ENCODE measurements at regions of chr16 and their contacts with region 1.

Region 1: DNA sequence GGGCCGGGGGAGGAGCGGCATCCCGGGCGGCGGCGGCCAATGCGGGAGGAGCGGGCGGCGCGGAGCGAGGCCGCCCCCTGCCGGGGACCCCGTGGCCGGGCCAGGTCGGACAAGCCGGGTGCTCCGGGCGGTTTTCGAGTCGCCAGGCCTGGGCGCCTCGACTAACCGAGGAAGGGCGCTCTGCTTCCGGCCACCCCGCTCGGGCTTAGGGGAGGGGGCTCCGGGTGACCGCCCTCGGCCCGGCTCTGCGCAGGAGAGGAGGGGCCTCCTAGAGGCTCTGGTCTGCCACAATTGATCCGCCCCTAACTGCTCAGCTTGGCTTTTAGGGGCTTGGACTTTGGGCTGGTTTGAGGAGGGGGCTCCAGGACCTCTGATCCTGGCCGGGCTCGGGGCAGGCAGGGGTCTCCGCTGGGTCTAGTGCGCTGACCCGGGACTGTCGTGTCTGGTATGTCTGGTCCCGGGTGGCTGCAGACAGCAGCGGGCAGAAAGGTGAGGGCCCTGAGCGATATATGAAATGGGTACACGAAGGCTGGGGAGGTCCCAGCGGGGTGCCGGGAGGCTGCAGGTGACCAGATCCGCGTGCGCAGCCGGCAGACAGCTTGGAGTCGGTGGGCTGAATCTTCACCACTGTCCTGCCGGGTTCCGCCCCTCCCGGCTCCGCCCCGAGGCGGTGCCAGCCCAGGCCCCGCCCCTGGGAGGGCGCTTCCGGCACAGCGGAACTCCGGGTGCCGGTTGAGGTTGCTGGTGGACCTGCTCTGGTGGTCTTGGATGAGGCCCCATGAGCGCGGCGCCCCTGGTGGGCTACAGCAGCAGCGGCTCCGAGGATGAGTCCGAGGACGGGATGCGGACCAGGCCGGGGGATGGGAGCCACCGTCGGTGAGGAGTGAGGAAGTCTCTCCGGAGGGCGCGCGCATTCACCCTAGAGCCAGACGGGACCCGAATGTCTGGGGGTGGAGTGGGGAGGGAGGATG is at the start of gene USB1:
- DNase-seq: peak; percentile 95
- H3K4me3 Mint-ChIP-seq: peak within 1 kb of the TSS; percentile 98
- H3K27ac Mint-ChIP-seq: peak within 1 kb of the TSS; percentile 76
- H3K4me1 Mint-ChIP-seq: peaks cover 30% of the 10 kb centered on the region
- H3K27me3 Mint-ChIP-seq: no peaks in the 10 kb centered on the region
- CTCF ChIP-seq: peak; percentile 91
- total RNA-seq, gene USB1: 59.3 and 67.0 TPM in 2 replicates

Region 2: GRCh38 chr16:57576429-57576870 is 424.5 kb before region 1 on chr16:
- CTCF ChIA-PET with region 1: interaction called, 6 read pairs
- intact Hi-C with region 1: loop called (anchors 1 kb)
- DNase-seq: peak; percentile 82
- H3K4me3 Mint-ChIP-seq: no peak overlapping the region
- H3K27ac Mint-ChIP-seq: no peak overlapping the region
- H3K4me1 Mint-ChIP-seq: peaks cover 8% of the 10 kb centered on the region
- H3K27me3 Mint-ChIP-seq: peaks cover 35% of the 10 kb centered on the region
- CTCF ChIP-seq: peak; percentile 98

Region 3: DNA sequence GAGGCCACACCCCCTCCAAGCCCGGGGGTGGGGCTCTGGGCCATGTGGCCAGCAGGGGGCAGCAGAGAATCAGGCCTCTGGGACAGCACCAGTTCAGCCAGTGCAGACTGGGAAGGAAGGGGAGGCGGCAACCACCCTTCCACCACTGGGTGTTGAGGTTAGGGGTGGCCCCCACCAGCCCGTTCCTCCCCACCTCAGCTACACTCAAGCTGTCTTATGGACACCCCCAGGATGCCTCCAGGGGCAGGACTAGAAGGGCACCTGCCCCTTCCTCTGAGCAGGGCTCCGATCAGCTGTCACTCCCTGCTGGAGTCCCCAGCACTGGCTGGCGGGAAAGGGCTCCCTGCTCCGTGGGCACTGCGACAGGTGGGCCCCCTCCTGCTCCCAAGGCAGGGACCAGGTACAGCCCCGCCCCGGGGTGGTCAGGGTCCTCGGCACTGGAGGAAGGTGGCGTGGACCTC is 243.6 kb before region 1 on chr16:
- CTCF ChIA-PET with region 1: interaction called, 5 read pairs
- intact Hi-C with region 1: loop called (anchors 10 kb)
- DNase-seq: peak; percentile 98
- H3K4me3 Mint-ChIP-seq: no peak overlapping the region
- H3K27ac Mint-ChIP-seq: no peak overlapping the region
- H3K4me1 Mint-ChIP-seq: no peaks in the 10 kb centered on the region
- H3K27me3 Mint-ChIP-seq: no peaks in the 10 kb centered on the region
- CTCF ChIP-seq: peak; percentile 95

Region 4: DNA sequence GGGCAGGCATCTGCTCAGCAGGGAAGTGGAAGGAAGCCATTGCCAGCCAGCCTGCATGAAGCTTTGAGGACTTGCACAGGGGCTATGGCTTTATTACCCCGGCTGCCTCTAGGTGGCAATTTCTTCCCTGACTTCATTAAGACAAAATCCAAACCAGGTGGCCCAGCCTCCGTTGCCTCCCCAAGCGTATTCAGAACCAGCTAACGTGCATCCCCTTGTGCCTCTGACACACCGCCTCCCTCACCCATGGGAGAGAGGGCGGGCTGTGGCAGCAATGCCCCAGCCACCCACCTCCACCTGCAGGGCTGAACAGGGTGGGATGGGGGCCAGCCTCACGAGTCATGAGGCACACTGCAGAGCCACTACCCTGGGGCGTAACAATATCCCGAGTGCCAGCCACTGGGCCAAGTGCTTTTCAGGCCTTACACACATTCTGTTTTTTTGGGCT is 205.5 kb before region 1 on chr16:
- CTCF ChIA-PET with region 1: interaction called, 5 read pairs
- intact Hi-C with region 1: loop called (anchors 5 kb)
- DNase-seq: peak; percentile 76
- H3K4me3 Mint-ChIP-seq: no peak overlapping the region
- H3K27ac Mint-ChIP-seq: no peak overlapping the region
- H3K4me1 Mint-ChIP-seq: peaks cover 37% of the 10 kb centered on the region
- H3K27me3 Mint-ChIP-seq: no peaks in the 10 kb centered on the region
- CTCF ChIP-seq: peak; percentile 72

Region 5: DNA sequence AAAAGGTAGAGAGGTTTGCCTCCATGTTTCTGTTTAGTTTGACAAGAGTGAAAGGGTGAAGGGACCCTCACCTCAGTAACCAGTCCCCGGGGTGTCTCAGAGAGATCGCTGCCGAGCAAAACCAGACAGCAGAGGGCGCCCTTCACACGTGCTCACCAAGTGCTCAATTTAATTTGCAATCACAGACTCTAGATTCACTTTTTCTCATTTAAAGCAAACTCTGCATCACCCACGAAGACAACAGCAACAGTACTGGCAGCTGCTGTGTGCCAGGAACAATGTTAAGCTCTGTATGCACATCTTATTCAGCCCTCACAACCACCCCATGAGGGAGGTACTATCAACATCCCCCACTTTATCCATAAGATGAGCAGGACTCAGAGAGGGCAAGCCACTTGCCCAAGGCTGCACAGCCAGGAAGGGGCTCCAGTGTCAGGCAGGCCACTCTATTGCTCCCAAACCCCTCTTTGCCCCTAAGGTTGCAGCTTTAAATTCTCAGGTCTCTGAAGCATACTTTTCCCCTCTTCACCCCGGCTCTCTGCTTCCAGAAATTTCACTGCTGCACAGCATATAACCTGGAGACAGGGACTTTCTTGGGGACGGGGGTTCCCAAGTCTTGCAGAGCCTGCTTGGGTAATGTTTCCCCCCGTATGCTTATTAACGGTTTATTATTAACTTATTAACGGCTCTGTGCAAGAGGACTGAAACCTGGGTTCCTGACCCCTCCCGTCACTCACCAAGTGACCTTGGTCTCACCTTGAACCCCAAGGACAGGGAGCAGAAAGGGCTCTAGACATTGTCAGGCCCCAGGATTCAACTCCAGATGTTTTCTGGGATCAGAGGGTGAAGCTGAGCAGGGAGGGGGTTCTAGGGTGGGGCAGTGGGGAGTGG is 101.0 kb before region 1 on chr16:
- CTCF ChIA-PET with region 1: interaction called, 7 read pairs
- intact Hi-C with region 1: loop called (anchors 1 kb)
- DNase-seq: peak; percentile 86
- H3K4me3 Mint-ChIP-seq: no peak overlapping the region
- H3K27ac Mint-ChIP-seq: no peak overlapping the region
- H3K4me1 Mint-ChIP-seq: peaks cover 26% of the 10 kb centered on the region
- H3K27me3 Mint-ChIP-seq: peaks cover 23% of the 10 kb centered on the region
- CTCF ChIP-seq: peak; percentile 85

Region 6: DNA sequence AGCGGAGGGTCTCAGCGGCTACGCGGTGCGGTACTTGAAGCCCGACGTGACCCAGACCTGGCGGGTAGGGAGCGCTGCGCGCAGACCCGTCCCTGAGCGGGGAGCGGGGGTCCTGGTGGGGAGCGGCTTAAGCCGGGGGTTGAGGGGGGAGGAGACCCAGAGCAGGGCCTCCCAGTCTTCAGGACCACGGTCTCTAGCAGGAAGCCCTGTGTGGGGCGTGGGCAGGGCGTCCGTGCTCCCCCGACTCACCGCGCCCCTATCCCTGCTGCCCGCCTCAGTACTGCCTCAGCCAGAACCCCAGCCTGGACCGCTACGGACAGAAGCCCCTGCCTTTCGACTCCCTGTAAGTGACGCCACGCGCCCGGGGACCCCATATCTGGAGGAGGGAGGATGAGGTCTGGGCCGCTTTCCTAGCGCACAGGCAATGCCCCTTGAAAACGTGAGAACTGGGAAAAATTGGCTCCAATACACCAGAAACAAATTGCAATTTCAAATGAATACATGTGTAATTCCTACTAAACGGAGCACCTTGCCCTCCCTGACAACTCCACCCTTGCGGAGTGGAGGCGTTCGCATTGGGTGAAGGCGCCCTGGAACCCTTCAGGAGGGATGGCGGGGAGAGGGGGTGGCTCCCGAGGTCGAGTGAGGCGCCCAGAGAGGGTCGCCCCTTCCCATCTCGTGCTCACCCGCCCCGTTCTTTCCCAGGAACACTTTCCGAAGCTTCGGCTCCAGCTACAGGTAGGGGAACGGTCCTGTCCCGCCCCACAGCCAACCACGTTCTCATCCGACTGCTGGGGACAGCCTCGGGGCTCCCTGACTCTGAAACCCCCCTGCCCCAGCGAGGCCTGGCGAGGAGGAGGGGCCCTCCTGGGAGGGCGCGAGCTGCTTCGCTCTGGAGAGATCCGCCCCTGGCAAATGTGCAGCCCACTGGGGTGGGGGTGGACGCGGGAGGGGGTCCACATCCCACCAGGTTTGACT is 15.5 kb before region 1 on chr16:
- CTCF ChIA-PET with region 1: no interaction called
- intact Hi-C with region 1: no loop called
- DNase-seq: no peak
- H3K4me3 Mint-ChIP-seq: no peak overlapping the region
- H3K27ac Mint-ChIP-seq: no peak overlapping the region
- H3K4me1 Mint-ChIP-seq: no peaks in the 10 kb centered on the region
- H3K27me3 Mint-ChIP-seq: peaks cover 17% of the 10 kb centered on the region
- CTCF ChIP-seq: no peak

Measured in Calu3 (cell line).